ENCODE measurements at regions of chr1 and their contacts with region 1.

Region 1: GRCh38 chr1:232620356-232620969 is 9.5 kb downstream of the SIPA1L2 start:
- DNase-seq: no peak

Region 2: GRCh38 chr1:232319072-232319471 is 301.4 kb before region 1 on chr1:
- intact Hi-C with region 1: loop called (anchors 5 kb)
- DNase-seq: peak; percentile 91

Region 3: GRCh38 chr1:232428786-232429530 is 191.5 kb before region 1 on chr1:
- intact Hi-C with region 1: loop called (anchors 2 kb)
- DNase-seq: no peak

Region 4: GRCh38 chr1:232589812-232590743 is 30.4 kb before region 1 on chr1:
- intact Hi-C with region 1: loop called (anchors 5 kb)
- DNase-seq: no peak

Region 5: GRCh38 chr1:232678186-232678935 is 57.9 kb after region 1 on chr1:
- intact Hi-C with region 1: no loop called
- DNase-seq: no peak

Region 6: DNA sequence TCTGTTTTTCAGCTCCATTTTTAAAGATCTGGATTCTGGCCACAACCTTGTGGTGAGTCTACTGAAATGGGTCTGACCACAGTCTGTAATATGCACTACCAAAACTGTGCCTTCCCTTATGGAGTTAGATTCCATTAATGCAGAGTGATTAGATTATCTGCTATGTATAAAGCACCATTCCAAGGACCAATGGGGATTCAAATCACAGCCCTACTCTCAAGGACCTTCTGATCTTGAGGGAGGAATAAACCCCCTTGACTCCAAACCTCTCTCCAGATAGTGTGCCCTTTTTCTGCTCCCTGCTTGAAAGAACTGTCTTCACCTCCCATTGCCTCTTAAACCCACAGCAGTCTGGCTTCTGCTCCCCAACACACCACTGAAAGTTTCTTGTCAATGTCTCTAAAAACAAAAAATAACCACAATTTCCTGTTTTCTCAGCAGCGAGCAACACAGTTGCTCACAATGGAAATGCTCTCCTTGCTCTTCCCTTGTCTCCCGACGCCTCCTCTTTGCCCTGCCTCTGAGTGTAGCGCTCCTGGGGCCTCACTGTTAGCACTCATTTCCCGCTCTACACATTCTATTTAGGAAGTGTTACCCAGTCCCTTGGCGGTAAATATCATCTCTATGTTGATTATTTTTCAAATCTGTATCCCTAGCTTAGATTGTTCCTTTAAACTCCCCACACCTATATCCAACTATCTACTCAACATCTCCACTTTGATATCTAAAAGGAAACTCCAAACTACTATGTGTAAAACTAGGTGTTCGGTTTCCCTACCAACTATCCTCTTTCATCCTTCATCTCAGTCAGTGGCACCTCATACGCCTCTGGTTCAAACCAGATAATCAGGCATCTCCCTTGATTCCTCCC is 661.5 kb after region 1 on chr1:
- intact Hi-C with region 1: no loop called
- DNase-seq: no peak

Measured in cardiac septum (tissue), 1 donor.